ENCODE measurements at regions of chr16 and their contacts with region 1.

Region 1: GRCh38 chr16:28549390-28549789 is 4.3 kb upstream of the SGF29 start:
- DNase-seq: peak in 3 of 7 donors; percentile 17 to 42 (median 37)
- H3K4me3 ChIP-seq: no peak overlapping the region
- H3K27ac ChIP-seq: no peak overlapping the region
- H3K4me1 ChIP-seq: peaks cover 0 to 2% of the 10 kb centered on the region in 2 donors
- H3K27me3 ChIP-seq: no peaks in the 10 kb centered on the region
- CTCF ChIP-seq: peak; percentile 39 to 69 (median 61)
- POLR2A ChIP-seq: no peak

Region 2: DNA sequence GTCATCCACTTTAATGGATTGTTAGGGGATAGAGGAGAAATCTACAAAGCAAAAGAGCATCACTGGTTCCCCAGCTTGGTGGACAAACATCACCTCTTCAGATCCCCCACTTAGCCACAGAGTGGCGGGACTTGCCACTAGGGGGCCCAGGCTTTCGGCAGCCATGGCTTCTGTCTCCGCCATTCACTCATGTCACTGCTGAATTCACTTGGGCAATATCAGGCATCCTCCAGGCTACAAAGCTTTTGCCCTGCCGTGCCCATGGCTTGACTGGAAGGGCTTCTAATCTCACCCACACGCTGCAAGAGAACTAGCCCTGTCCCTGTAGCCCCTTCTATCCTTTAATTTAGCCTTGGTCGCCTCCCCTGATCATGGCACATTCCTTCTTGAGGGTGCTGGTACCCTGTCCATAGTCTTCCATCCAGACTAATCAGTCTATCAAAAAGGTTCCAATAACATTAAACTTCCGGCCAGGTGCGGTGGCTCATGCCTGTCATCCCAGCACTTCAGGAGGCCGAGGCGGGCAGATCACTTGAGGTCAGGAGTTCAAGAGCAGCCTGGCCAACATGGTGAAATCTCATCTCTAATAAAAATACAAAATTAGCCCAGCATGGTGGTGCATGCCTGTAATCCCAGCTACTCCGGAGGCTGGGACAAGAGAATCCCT is 222.3 kb before region 1 on chr16:
- intact Hi-C with region 1: loop called in 1 of 2 experiments (anchors 10 kb)
- DNase-seq: peak; percentile 32 to 69 (median 62)
- H3K4me3 ChIP-seq: no peak overlapping the region
- H3K27ac ChIP-seq: no peak overlapping the region
- H3K4me1 ChIP-seq: no peaks in the 10 kb centered on the region
- H3K27me3 ChIP-seq: no peaks in the 10 kb centered on the region
- CTCF ChIP-seq: peak; percentile 37 to 75 (median 67)
- POLR2A ChIP-seq: no peak

Region 3: GRCh38 chr16:28504707-28505409 is 44.5 kb before region 1 on chr16:
- intact Hi-C with region 1: no loop called
- DNase-seq: no peak
- H3K4me3 ChIP-seq: no peak overlapping the region
- H3K27ac ChIP-seq: no peak overlapping the region
- H3K4me1 ChIP-seq: no peaks in the 10 kb centered on the region
- H3K27me3 ChIP-seq: no peaks in the 10 kb centered on the region
- CTCF ChIP-seq: no peak
- POLR2A ChIP-seq: no peak

Region 4: GRCh38 chr16:28587386-28587785 is 38.0 kb after region 1 on chr16:
- intact Hi-C with region 1: no loop called
- DNase-seq: peak in 4 of 7 donors; percentile 42 to 59 (median 50)
- H3K4me3 ChIP-seq: no peak overlapping the region
- H3K27ac ChIP-seq: no peak overlapping the region
- H3K4me1 ChIP-seq: no peaks in the 10 kb centered on the region
- H3K27me3 ChIP-seq: no peaks in the 10 kb centered on the region
- CTCF ChIP-seq: no peak
- POLR2A ChIP-seq: no peak

Region 5: DNA sequence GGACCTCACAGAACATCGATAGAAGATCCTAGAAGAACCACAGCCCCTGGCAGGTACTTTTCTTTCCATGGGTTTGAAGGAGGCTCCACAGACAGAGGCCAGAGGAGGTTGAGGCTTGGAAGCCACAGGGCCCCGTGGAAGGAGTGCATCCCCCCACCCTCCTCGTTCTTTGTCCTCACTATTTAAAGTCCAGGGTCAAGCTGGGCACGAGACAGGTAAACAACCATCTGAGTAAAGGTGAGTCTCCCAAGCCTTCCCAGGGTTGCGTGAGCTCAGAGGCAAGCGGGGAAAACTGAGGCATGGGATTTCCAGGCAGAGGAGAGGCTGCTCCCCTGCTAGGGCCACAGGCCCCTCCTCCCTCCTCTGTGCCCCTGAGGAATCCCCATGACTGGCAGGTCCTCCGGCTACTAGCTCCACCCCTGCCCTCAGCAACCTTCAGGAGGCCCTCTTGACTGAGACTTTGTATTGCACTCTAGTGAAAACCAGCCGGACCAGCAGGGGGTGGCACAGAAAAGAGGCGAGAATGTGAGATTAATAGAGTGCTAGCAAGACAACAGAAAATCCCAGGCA is 48.4 kb after region 1 on chr16:
- intact Hi-C with region 1: no loop called
- DNase-seq: no peak
- H3K4me3 ChIP-seq: no peak overlapping the region
- H3K27ac ChIP-seq: no peak overlapping the region
- H3K4me1 ChIP-seq: peaks cover 3 to 4% of the 10 kb centered on the region in 2 donors
- H3K27me3 ChIP-seq: no peaks in the 10 kb centered on the region
- CTCF ChIP-seq: no peak
- POLR2A ChIP-seq: no peak